ENCODE measurements at regions of chr12 and their contacts with region 1.

Region 1: DNA sequence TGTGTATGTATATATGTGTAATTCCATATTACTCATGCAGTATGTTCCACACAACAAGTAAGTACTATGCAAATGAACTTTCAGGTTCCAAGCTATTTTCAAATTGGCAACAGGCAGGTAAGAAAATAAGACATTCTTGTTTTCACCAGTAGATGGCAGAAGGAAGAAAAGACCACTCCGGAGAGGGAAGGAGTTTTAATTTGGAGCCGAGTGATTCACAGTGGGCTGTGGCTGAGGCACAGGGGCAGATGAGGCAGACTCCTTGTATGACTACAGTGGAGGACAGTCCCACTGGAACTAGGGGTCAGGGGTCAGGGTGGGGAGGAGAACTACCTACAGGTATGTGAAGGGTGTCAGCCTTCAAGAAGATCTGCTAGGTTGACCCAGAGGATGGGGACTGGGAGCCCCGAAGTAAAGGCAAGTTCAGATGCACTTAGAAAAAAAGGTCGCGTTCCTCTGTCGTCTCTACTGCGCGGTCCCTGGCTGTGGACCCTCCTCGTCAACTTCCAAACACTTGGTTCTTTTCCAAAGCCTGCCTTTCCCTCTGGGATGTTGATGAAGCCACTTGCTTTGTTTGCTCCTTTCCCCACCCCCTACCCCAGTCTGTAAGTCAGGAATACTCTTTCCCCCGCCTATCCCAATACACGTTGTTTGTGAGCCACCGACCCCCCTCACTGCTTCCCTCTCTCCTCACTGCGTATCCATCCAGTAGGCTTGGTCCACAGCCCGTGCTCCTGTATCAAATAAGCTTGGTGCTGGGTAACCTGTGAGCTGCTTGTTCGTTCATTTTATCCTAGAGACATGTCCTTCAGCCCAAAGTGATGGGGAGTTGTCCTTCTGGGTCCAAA is 24.1 kb downstream of the DDX47 start:
- DNase-seq: peak; percentile 37
- H3K4me3 Mint-ChIP-seq: no peak overlapping the region
- H3K27ac Mint-ChIP-seq: peak overlapping the region; percentile 59
- H3K4me1 Mint-ChIP-seq: peaks cover 35% of the 10 kb centered on the region
- H3K27me3 Mint-ChIP-seq: no peaks in the 10 kb centered on the region

Region 2: DNA sequence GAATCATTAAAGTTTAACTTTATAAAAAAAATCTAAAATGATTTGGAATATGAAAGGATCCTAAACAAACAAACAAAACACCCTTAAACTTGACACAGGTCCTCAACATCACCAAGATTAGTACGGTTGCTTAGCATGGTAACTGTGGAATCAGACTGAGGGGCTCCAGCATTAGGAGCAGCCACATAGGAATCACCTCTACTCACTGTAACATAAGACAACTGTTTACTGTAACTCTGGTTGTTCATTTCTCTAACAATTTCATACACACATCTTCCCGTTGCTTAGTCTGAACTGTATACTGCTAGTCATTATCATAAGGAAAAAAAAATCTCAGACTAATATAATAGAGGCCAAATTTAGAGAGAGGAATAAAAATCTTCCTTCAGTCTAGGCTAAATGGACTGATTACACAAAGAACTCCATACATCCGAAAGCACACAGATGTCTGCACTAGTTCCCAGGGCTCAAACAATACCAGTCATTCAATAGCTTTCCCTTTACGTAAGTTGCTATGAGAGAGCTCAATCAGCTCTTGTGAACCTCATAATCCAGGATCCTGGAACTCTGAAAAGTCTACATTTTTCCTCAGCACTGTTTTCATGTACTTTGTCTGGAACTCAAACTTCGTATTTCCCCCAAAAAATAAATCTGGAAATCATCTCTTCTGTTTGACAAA is 596.4 kb before region 1 on chr12:
- CTCF ChIA-PET with region 1: no interaction called
- POLR2A ChIA-PET with region 1: no interaction called
- DNase-seq: no peak
- H3K4me3 Mint-ChIP-seq: no peak overlapping the region
- H3K27ac Mint-ChIP-seq: no peak overlapping the region
- H3K4me1 Mint-ChIP-seq: no peaks in the 10 kb centered on the region
- H3K27me3 Mint-ChIP-seq: peaks cover 14% of the 10 kb centered on the region

Region 3: GRCh38 chr12:12819671-12820311 is 17.5 kb before region 1 on chr12:
- CTCF ChIA-PET with region 1: interaction called, 13 read pairs
- POLR2A ChIA-PET with region 1: no interaction called
- DNase-seq: no peak
- H3K4me3 Mint-ChIP-seq: no peak overlapping the region
- H3K27ac Mint-ChIP-seq: no peak overlapping the region
- H3K4me1 Mint-ChIP-seq: peaks cover 47% of the 10 kb centered on the region
- H3K27me3 Mint-ChIP-seq: no peaks in the 10 kb centered on the region

Region 4: GRCh38 chr12:12864243-12864642 is 27.0 kb after region 1 on chr12:
- CTCF ChIA-PET with region 1: no interaction called
- POLR2A ChIA-PET with region 1: no interaction called
- DNase-seq: no peak
- H3K4me3 Mint-ChIP-seq: no peak overlapping the region
- H3K27ac Mint-ChIP-seq: no peak overlapping the region
- H3K4me1 Mint-ChIP-seq: no peaks in the 10 kb centered on the region
- H3K27me3 Mint-ChIP-seq: no peaks in the 10 kb centered on the region

Region 5: DNA sequence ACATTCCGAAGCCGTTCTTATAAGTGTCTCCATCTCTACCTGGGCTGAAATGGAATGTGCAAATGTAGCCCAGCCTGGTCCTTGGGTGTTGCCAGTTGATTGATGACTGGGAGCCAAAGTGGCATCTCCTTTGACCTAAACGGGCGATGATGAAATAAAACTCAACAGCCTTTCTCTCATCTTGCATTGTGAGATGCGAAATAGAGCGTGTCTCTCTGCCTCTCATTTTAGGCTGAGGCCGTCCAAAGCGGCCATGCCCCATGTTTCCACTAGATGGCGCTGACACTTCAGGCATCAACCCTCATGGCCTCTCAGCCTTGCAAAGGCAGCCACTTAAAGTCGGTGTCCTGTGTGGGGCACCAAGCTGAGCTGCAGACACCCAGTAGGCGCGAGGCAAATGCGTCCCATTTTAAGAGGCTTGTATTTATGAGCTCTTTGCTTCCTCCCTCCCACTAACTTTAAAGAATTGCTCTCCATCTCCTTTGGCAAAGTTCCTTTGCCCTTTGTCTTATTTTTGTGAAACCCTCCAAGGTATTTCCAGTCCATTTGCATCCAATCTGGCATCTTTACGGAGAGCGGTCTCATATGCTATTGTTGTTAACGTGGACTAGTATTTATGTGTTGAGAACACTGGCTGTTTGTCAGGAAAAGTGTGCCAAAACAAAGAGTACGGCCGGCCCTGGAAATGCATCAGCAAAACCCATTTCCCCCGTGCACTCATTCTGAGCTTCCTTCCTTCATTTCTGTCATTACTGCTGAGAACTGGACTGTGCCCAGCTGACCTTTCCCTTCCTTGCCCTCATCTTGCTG is 79.1 kb after region 1 on chr12:
- CTCF ChIA-PET with region 1: no interaction called
- POLR2A ChIA-PET with region 1: no interaction called
- DNase-seq: peak; percentile 90
- H3K4me3 Mint-ChIP-seq: no peak overlapping the region
- H3K27ac Mint-ChIP-seq: no peak overlapping the region
- H3K4me1 Mint-ChIP-seq: peaks cover 12% of the 10 kb centered on the region
- H3K27me3 Mint-ChIP-seq: peaks cover 12% of the 10 kb centered on the region

Measured in activated CD4-positive, alpha-beta T cell treated with anti-CD3 and anti-CD28 coated beads, Interleukin-2, amount 10 ng/mL, durations not matched to agents 7 days and 5 days (primary cell).